GM12878 (cell line): ENCODE measurements at regions of chr10 and their contacts with region 1.

Region 1: DNA sequence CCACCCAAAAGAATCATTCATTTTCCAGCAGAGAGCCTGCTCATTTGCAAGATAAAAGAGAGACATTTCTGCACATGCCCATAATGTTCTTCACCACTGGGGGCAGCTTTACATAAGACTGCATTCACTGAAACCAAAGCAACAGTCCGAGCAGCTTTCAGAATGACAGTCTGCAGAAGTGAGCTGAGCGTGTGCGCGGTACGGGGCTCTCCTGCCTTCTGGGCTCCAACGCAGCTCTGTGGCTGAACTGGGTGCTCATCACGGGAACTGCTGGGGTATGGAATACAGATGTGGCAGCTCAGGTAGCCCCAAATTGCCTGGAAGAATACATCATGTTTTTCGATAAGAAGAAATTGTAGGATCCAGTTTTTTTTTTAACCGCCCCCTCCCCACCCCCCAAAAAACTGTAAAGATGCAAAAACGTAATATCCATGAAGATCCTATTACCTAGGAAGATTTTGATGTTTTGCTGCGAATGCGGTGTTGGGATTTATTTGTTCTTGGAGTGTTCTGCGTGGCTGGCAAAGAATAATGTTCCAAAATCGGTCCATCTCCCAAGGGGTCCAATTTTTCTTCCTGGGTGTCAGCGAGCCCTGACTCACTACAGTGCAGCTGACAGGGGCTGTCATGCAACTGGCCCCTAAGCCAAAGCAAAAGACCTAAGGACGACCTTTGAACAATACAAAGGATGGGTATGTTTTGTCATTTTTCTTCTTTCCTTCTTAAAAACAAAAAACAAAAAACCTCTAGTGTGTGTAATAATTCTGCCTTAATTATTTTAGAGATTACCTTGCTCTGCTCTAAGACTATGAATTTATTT is at the start of gene LRRTM3:
- DNase-seq: peak; percentile 20
- ATAC-seq: peak; percentile 100
- H3K4me3 ChIP-seq: no peak within 1 kb of the TSS
- H3K27ac ChIP-seq: no peak within 1 kb of the TSS
- H3K4me1 ChIP-seq: no peaks in the 10 kb centered on the region
- H3K27me3 ChIP-seq: peaks cover 0 to 8% of the 10 kb centered on the region in 2 experiments; a peak in 2 of 4 replicates
- CTCF ChIP-seq: peak; percentile 67 to 76 (median 70); a peak in 5 of 6 replicates
- EP300 ChIP-seq: no peak
- POLR2A ChIP-seq: no peak
- RAD21 ChIP-seq: peak; percentile 53
- polyA plus RNA-seq, gene LRRTM3: not detected

Region 2: GRCh38 chr10:66045859-66046258 is 880.2 kb before region 1 on chr10:
- CTCF ChIA-PET with region 1: no interaction called
- POLR2A ChIA-PET with region 1: no interaction called
- RAD21 ChIA-PET with region 1: no interaction called
- SMC1A ChIA-PET with region 1: no interaction called
- in situ Hi-C with region 1: no loop called
- intact Hi-C with region 1: loop called (anchors 5 kb)
- DNase-seq: no peak
- ATAC-seq: no peak
- H3K4me3 ChIP-seq: no peak overlapping the region
- H3K27ac ChIP-seq: no peak overlapping the region
- H3K4me1 ChIP-seq: no peaks in the 10 kb centered on the region
- H3K27me3 ChIP-seq: no peaks in the 10 kb centered on the region
- CTCF ChIP-seq: no peak
- EP300 ChIP-seq: no peak
- POLR2A ChIP-seq: no peak
- RAD21 ChIP-seq: no peak

Region 3: DNA sequence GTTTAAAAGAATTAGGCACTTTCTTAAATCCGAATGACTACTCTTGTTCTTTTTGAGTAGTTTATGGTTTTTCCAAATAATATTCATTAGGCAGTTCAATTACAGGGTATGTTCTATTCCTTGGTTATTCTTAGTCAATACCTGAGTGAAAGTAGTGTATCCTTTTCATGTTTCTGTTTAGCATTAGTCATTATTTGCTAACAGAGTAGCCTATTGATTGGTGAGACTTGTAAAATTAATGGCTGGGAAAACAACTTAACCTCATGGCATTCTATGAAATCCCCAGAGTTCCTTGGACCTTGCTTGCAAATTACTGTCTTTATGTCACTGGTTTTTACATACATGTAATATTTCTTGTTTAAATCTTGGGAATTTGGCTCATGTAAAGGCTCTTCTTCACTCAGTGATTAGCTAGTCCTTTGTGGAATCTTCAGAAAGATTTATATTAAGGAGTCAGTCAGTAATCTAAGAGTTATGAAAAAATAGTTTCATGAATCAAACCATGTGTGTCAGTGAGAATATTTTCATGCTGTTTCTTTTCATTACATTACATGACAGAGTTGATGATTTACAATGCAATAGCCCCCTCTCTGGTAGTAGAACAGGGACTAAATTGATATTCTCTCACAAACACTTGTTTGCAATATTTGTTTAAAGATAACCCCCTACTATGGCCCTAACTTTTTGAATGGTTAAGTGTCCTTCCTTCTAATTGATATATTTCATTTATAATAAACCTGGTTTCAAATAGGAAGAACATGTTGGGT is 81.7 kb before region 1 on chr10:
- CTCF ChIA-PET with region 1: no interaction called
- POLR2A ChIA-PET with region 1: no interaction called
- RAD21 ChIA-PET with region 1: no interaction called
- SMC1A ChIA-PET with region 1: no interaction called
- in situ Hi-C with region 1: no loop called
- intact Hi-C with region 1: no loop called
- DNase-seq: no peak
- ATAC-seq: no peak
- H3K4me3 ChIP-seq: no peak overlapping the region
- H3K27ac ChIP-seq: no peak overlapping the region
- H3K4me1 ChIP-seq: no peaks in the 10 kb centered on the region
- H3K27me3 ChIP-seq: no peaks in the 10 kb centered on the region
- CTCF ChIP-seq: no peak
- EP300 ChIP-seq: no peak
- POLR2A ChIP-seq: no peak
- RAD21 ChIP-seq: no peak